Pancreas (tissue), 10 donors: ENCODE measurements at regions of chr16 and their contacts with region 1.

Region 1: GRCh38 chr16:89319883-89320781 is 102.6 kb downstream of the ZNF778 start:
- DNase-seq: peak in 5 of 6 donors; percentile 56 to 85 (median 73)
- ATAC-seq: peak; percentile 76 to 80 (median 78)
- H3K4me3 ChIP-seq: peak overlapping the region in 1 of 4 donors; percentile 8
- H3K27ac ChIP-seq: peak overlapping the region in 2 of 4 donors; percentile 42 to 44
- H3K4me1 ChIP-seq: peaks cover 15 to 27% (median 17%) of the 10 kb centered on the region in 3 donors
- H3K27me3 ChIP-seq: no peaks in the 10 kb centered on the region
- CTCF ChIP-seq: no peak

Region 2: GRCh38 chr16:89268987-89269735 is 51.0 kb before region 1 on chr16:
- intact Hi-C with region 1: no loop called
- DNase-seq: no peak
- ATAC-seq: peak in 3 of 4 donors; percentile 7 to 51 (median 26)
- H3K4me3 ChIP-seq: no peak overlapping the region
- H3K27ac ChIP-seq: no peak overlapping the region
- H3K4me1 ChIP-seq: no peaks in the 10 kb centered on the region
- H3K27me3 ChIP-seq: no peaks in the 10 kb centered on the region
- CTCF ChIP-seq: no peak

Region 3: GRCh38 chr16:89556750-89557689 is 236.9 kb after region 1 on chr16:
- intact Hi-C with region 1: loop called in 1 of 3 experiments (anchors 10 kb)
- DNase-seq: peak in 5 of 6 donors; percentile 62 to 92 (median 76)
- ATAC-seq: peak in 3 of 4 donors; percentile 37 to 42 (median 40)
- H3K4me3 ChIP-seq: no peak overlapping the region
- H3K27ac ChIP-seq: no peak overlapping the region
- H3K4me1 ChIP-seq: peaks cover 2 to 9% (median 7%) of the 10 kb centered on the region in 3 donors
- H3K27me3 ChIP-seq: no peaks in the 10 kb centered on the region
- CTCF ChIP-seq: peak; percentile 42 to 75 (median 64)